A549 (cell line): ENCODE measurements at regions of chr2 and their contacts with region 1.

Region 1: GRCh38 chr2:234550511-234551107 is 53.7 kb upstream of the ARL4C start:
- DNase-seq: peak; percentile 63 to 74
- ATAC-seq: peak; percentile 93 to 97
- H3K4me3 ChIP-seq: no peak overlapping the region
- H3K27ac ChIP-seq: peak overlapping the region; percentile 52 to 65
- H3K4me1 ChIP-seq: peaks cover 6% of the 10 kb centered on the region; the same call in 2 of the 3 replicates
- CTCF ChIP-seq: peak; percentile 98
- EP300 ChIP-seq: no peak
- POLR2A ChIP-seq: no peak
- RAD21 ChIP-seq: peak; percentile 99 to 100

Region 2: DNA sequence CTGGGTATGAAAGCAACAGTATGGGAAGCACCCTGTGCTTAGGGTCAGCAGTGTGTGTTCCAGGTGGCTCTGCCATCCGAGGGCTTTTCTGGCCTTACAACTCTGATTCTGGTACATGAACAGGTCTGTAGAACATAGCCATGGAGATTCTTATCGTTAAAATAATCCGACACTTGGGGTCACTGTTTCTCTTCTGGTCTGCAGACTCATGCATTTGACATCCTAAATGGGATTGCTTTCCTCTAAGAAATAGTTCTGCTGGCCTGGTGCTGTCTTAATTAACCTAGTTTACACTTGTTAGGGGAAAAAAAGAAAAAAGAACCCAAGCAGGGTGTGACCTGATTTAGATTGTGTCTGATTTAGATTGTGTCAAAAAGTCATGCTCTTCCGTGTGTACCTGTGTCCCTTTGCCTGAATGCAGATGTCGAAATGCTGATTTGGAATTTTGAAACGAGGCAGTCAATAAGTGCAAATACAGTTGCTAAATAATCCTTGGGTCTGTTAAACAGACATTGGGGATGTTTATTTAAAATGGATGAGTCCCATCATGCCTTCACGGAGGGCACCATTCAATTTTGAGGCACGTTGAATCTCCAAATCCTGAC is 573.8 kb before region 1 on chr2:
- CTCF ChIA-PET with region 1: interaction called, 60 read pairs
- POLR2A ChIA-PET with region 1: no interaction called
- DNase-seq: peak; percentile 64 to 84
- ATAC-seq: peak; percentile 44 to 80; a peak in 4 of 6 replicates
- H3K4me3 ChIP-seq: no peak overlapping the region
- H3K27ac ChIP-seq: peak overlapping the region; percentile 84 to 98
- H3K4me1 ChIP-seq: peaks cover 83% of the 10 kb centered on the region
- CTCF ChIP-seq: peak; percentile 94
- EP300 ChIP-seq: peak in 1 of 2 experiments; percentile 42; a peak in 2 of 5 replicates
- POLR2A ChIP-seq: no peak
- RAD21 ChIP-seq: peak; percentile 97 to 98

Region 3: DNA sequence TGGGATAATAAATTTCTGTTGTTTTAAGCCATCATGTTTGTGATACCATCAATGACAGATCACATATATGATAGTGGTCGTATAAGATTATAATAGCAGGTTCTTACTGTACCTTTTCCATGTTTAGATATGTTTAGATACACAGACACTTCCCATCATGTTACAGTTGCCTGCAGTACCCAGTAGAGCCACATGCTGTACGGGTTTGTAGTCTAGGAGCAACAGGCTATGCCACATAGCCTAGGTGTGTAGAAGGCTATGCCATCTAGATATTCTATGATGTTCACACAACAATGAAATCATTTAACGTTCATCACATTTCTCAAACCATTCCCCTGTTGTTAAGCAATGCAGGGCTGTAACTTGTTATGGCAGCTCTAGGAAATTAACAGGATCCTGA is 268.3 kb after region 1 on chr2:
- CTCF ChIA-PET with region 1: no interaction called
- POLR2A ChIA-PET with region 1: no interaction called
- DNase-seq: no peak
- ATAC-seq: peak; percentile 60 to 73; a peak in 3 of 6 replicates
- H3K4me3 ChIP-seq: no peak overlapping the region
- H3K27ac ChIP-seq: peak overlapping the region in 1 of 2 experiments; percentile 17; a peak in 3 of 6 replicates
- H3K4me1 ChIP-seq: peaks cover 10% of the 10 kb centered on the region
- CTCF ChIP-seq: no peak
- EP300 ChIP-seq: no peak
- POLR2A ChIP-seq: no peak
- RAD21 ChIP-seq: no peak